A673 (cell line): ENCODE measurements at regions of chr2 and their contacts with region 1.

Region 1: DNA sequence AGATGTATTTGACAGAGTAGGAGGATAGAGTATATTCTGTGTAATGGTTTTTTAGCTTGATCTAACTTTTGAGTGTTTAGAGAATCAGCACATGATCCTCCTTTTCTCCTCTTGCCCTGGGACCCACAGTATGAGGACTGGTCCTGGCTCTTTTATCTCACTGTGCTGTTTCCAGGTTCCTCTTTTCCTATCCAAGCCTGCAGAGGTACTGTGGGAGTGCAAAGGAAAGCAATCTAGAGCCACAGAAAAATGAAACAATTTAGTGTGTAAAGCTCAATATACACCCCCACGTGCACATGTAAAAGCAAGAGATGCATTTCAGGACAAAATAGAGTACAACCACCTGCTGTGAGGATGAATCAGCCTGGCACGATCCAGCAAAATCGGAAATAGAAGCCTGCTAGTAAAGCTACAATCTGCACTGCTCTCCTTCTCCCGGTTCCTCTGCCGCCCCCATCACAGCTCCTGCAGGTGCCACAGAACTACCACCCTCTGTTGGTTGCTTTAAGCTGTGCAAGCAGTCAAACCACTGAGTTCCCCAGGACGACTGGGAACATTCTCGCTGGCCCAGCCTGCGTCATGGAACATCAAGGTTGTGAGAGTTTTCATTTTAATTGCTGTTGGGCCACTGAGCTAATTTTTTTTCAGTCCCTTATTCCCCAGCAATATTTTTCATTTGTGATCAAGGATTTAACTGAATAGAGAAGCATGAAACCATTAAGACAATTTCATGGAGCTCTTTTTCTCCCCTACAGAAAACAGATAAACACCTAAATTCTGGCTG is 47.8 kb upstream of the MAPRE3 start:
- DNase-seq: peak; percentile 92
- H3K4me3 ChIP-seq: no peak overlapping the region
- H3K27ac ChIP-seq: peak overlapping the region; percentile 34
- H3K4me1 ChIP-seq: peaks cover 25% of the 10 kb centered on the region
- H3K27me3 ChIP-seq: no peaks in the 10 kb centered on the region
- CTCF ChIP-seq: peak; percentile 89

Region 2: GRCh38 chr2:26846328-26847306 is 76.0 kb before region 1 on chr2:
- CTCF ChIA-PET with region 1: interaction called, 47 read pairs
- POLR2A ChIA-PET with region 1: no interaction called
- intact Hi-C with region 1: loop called (anchors 1 kb)
- DNase-seq: peak; percentile 92
- H3K4me3 ChIP-seq: peak overlapping the region; percentile 97
- H3K27ac ChIP-seq: no peak overlapping the region
- H3K4me1 ChIP-seq: peaks cover 25% of the 10 kb centered on the region
- H3K27me3 ChIP-seq: peaks cover 7% of the 10 kb centered on the region
- CTCF ChIP-seq: peak; percentile 91

Region 3: GRCh38 chr2:26911911-26912861 is 10.4 kb before region 1 on chr2:
- CTCF ChIA-PET with region 1: interaction called, 17 read pairs
- POLR2A ChIA-PET with region 1: interaction called, 4 read pairs
- intact Hi-C with region 1: no loop called
- DNase-seq: peak; percentile 95
- H3K4me3 ChIP-seq: no peak overlapping the region
- H3K27ac ChIP-seq: peak overlapping the region; percentile 66
- H3K4me1 ChIP-seq: peaks cover 38% of the 10 kb centered on the region
- H3K27me3 ChIP-seq: no peaks in the 10 kb centered on the region
- CTCF ChIP-seq: no peak